K562 (cell line): ENCODE measurements at regions of chr15 and their contacts with region 1.

Region 1: GRCh38 chr15:97248376-97248775 is 712.1 kb upstream of the ARRDC4 start:
- DNase-seq: no peak
- ATAC-seq: no peak
- H3K4me3 ChIP-seq: no peak overlapping the region
- H3K27ac ChIP-seq: no peak overlapping the region
- H3K4me1 ChIP-seq: no peaks in the 10 kb centered on the region
- H3K27me3 ChIP-seq: no peaks in the 10 kb centered on the region
- CTCF ChIP-seq: no peak
- EP300 ChIP-seq: no peak
- POLR2A ChIP-seq: no peak
- RAD21 ChIP-seq: no peak

Region 2: DNA sequence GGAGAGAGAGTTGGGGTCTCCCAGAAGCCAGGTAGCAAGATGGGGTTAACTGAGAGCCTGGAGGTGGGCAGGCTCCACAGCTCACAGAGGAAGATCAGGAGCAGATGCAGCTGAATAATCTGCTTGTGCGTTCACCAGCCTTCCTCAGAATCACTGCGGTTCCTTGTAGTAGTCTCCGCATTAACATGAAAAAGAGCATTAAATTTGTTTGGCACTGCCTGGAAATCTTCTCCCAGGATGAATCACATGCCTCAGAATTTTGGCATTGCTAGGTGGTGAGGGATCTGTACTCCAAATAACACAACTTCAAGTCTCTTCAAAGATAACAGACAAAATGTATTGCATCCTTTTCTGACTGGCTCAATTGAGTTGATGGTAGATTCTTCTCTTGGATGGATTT is 11.6 kb after region 1 on chr15:
- CTCF ChIA-PET with region 1: no interaction called
- POLR2A ChIA-PET with region 1: no interaction called
- in situ Hi-C with region 1: no loop called
- intact Hi-C with region 1: no loop called
- DNase-seq: no peak
- ATAC-seq: no peak
- H3K4me3 ChIP-seq: no peak overlapping the region
- H3K27ac ChIP-seq: no peak overlapping the region
- H3K4me1 ChIP-seq: no peaks in the 10 kb centered on the region
- H3K27me3 ChIP-seq: no peaks in the 10 kb centered on the region
- CTCF ChIP-seq: no peak
- EP300 ChIP-seq: no peak
- POLR2A ChIP-seq: no peak
- RAD21 ChIP-seq: no peak

Region 3: DNA sequence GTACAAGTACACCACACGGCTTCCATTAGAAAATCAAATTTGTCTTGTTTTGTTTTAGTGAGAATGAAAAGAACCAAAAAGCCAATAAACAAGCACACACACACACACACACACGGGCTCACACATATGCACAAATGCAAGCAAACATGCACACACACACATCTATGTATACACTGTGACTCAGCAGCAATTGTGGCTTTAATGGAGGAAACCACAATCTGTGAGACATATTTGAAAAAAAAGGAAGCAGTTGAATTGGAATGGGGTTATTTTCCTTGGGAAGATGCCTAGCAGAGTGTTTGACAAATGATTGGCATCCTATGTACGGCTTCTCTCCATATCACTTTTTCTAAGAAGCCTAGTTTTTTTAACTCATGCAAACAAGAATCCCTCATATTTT is 511.0 kb after region 1 on chr15:
- CTCF ChIA-PET with region 1: no interaction called
- POLR2A ChIA-PET with region 1: no interaction called
- in situ Hi-C with region 1: no loop called
- intact Hi-C with region 1: loop called (anchors 10 kb)
- DNase-seq: peak in 1 of 4 experiments; percentile 15
- ATAC-seq: no peak
- H3K4me3 ChIP-seq: no peak overlapping the region
- H3K27ac ChIP-seq: no peak overlapping the region
- H3K4me1 ChIP-seq: no peaks in the 10 kb centered on the region
- H3K27me3 ChIP-seq: no peaks in the 10 kb centered on the region
- CTCF ChIP-seq: no peak
- EP300 ChIP-seq: no peak
- POLR2A ChIP-seq: no peak
- RAD21 ChIP-seq: no peak